ENCODE measurements at regions of chr1 and their contacts with region 1.

Region 1: GRCh38 chr1:211382714-211383480 is 56.3 kb downstream of the TRAF5 start:
- DNase-seq: peak; percentile 84 to 92
- H3K4me3 ChIP-seq: peak overlapping the region; percentile 68
- H3K27ac ChIP-seq: peak overlapping the region; percentile 93
- H3K4me1 ChIP-seq: peaks cover 13% of the 10 kb centered on the region
- H3K27me3 ChIP-seq: no peaks in the 10 kb centered on the region
- CTCF ChIP-seq: no peak

Region 2: GRCh38 chr1:210951279-210951678 is 431.6 kb before region 1 on chr1:
- CTCF ChIA-PET with region 1: no interaction called
- POLR2A ChIA-PET with region 1: no interaction called
- intact Hi-C with region 1: no loop called
- DNase-seq: no peak
- H3K4me3 ChIP-seq: no peak overlapping the region
- H3K27ac ChIP-seq: no peak overlapping the region
- H3K4me1 ChIP-seq: no peaks in the 10 kb centered on the region
- H3K27me3 ChIP-seq: peaks cover 4% of the 10 kb centered on the region; the same call in 1 of the 2 replicates
- CTCF ChIP-seq: no peak

Region 3: DNA sequence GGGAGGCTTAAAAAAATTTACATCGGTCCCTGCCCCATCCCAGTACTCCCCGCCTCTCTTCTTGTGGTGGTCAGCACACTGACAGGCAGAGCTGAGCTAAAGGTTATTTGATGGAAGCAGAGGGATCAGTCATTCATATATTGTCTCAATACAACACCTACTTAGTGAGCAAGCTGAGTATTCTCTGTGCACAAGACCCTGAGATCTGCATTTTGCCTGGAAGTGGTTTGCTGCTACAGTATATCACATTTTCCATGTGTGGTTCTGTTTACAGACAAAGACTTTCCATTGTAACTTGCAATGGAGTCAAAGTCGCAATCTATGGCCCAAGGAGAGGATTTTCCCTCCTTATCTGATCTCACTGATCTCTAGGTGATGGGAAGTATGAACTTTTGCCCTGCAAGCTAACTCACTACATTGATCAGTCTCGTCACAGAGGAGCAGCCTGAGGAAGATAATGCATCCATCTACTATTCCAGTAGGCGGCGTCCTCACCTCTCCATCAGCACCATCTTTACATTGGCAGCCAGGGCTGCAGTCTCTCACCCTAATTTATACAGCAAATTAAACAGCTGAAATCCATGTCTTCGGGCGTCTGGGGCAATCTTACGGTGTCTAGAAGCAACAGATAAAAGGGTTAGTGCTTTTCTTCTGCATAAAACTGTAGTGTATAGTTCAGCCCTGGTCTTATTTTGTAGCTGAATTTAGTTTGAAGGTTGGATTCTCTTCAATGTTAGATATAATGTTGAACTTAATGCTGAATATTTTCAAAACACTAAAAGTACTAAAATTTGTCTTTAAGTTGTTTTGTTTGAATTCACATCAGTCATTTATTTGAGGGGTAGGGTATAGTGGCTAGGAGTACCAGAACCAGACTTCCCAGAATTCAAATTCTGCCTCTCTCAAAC is 59.5 kb before region 1 on chr1:
- CTCF ChIA-PET with region 1: no interaction called
- POLR2A ChIA-PET with region 1: interaction called, 5 read pairs
- intact Hi-C with region 1: loop called (anchors 2 kb)
- DNase-seq: peak in 1 of 2 experiments; percentile 59
- H3K4me3 ChIP-seq: no peak overlapping the region
- H3K27ac ChIP-seq: no peak overlapping the region
- H3K4me1 ChIP-seq: peaks cover 9% of the 10 kb centered on the region
- H3K27me3 ChIP-seq: no peaks in the 10 kb centered on the region
- CTCF ChIP-seq: peak; percentile 89

Region 4: DNA sequence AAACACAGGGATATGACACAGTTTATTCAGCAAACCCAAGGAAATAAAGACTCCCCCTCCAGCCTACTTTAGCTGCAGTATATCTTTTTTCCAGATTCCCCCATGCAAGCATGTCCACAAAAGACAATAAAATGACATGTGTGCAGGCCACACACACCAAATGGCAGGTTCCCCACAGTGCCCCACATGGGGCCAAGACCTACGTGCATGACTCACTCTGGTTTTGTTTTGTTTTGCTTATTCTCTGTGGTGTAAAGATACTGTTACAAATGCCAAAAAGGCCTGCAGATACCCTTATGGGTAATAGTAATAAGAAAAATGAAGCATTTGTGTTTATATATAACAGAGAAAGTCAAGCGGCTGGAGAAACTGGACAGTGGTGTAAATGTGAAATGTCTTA is 37.5 kb after region 1 on chr1:
- CTCF ChIA-PET with region 1: no interaction called
- POLR2A ChIA-PET with region 1: no interaction called
- intact Hi-C with region 1: no loop called
- DNase-seq: no peak
- H3K4me3 ChIP-seq: no peak overlapping the region
- H3K27ac ChIP-seq: no peak overlapping the region
- H3K4me1 ChIP-seq: no peaks in the 10 kb centered on the region
- H3K27me3 ChIP-seq: no peaks in the 10 kb centered on the region
- CTCF ChIP-seq: no peak

Region 5: DNA sequence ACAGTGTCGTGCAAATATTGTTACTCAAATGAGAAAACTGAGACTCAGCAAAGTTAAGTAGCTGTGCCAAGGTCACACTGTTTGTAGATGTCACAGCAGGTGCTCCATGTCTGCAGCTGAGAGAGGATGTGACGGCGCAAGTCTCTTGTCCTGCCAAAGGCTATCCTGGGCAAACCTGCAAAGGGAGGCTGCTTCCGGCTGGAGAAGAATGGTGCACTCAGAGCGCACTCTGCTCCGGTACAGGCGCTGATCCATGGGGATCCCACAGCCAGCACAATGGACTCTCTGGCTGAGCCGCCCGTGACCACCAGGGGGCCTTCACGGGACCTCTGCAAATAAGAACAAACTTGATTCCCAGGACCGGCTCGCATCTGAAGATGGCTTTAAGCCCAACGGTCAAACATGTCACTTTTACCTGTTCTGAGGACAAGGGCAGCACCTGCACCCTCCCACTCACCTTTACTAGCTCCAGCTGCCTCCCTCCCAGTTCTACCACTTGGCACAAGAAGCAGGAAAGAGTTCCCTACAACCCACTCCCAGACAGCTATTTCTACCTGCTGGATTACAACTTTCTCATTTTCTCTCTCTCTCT is 87.1 kb after region 1 on chr1:
- CTCF ChIA-PET with region 1: no interaction called
- POLR2A ChIA-PET with region 1: no interaction called
- intact Hi-C with region 1: no loop called
- DNase-seq: peak in 1 of 2 experiments; percentile 83
- H3K4me3 ChIP-seq: no peak overlapping the region
- H3K27ac ChIP-seq: no peak overlapping the region
- H3K4me1 ChIP-seq: no peaks in the 10 kb centered on the region
- H3K27me3 ChIP-seq: no peaks in the 10 kb centered on the region
- CTCF ChIP-seq: peak; percentile 81

Region 6: GRCh38 chr1:211675230-211676105 is 292.6 kb after region 1 on chr1 and contains the start of gene NEK2:
- CTCF ChIA-PET with region 1: no interaction called
- POLR2A ChIA-PET with region 1: no interaction called
- intact Hi-C with region 1: loop called (anchors 5 kb)
- DNase-seq: peak; percentile 93 to 97
- H3K4me3 ChIP-seq: peak within 1 kb of the TSS; percentile 81
- H3K27ac ChIP-seq: peak within 1 kb of the TSS; percentile 57
- H3K4me1 ChIP-seq: peaks cover 30% of the 10 kb centered on the region
- H3K27me3 ChIP-seq: no peaks in the 10 kb centered on the region
- CTCF ChIP-seq: no peak
- total RNA-seq, gene NEK2: 56.0 and 60.5 TPM in 2 replicates

Measured in PC-9 (cell line).